GM18951 (cell line): ENCODE measurements at regions of chr3 and their contacts with region 1.

Region 1: DNA sequence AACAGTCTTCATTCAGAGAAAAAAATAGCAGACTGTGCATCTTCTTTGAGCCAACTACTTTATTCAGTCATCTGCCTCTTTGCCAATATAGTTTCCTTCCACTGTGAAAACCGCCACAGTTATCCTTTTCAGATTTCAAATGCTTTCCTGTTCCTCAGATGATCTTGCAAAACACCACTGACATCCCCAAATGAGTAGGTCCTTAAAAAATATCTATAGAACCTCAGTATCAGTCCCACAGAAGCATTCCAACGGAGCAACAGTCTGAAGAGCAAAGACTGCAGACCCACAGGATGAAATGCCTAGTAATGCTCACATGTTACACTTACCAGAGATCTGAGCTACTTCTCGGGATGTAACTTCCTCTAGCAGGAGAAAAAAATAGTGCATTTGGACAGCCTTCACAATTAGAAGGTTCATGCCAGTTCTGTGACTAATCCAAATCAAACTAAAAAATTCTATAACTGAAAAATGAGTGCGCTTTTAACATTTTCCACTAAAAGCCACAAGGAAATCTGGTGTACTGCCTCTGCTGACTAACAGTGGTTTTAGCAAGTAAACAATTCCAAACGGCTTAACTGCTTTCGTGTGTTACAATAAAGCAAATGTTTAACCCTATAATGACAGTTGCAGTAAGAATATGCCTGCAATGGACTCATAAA is at the start of gene ANKRD28:
- POLR2A ChIP-seq: no peak

Region 2: DNA sequence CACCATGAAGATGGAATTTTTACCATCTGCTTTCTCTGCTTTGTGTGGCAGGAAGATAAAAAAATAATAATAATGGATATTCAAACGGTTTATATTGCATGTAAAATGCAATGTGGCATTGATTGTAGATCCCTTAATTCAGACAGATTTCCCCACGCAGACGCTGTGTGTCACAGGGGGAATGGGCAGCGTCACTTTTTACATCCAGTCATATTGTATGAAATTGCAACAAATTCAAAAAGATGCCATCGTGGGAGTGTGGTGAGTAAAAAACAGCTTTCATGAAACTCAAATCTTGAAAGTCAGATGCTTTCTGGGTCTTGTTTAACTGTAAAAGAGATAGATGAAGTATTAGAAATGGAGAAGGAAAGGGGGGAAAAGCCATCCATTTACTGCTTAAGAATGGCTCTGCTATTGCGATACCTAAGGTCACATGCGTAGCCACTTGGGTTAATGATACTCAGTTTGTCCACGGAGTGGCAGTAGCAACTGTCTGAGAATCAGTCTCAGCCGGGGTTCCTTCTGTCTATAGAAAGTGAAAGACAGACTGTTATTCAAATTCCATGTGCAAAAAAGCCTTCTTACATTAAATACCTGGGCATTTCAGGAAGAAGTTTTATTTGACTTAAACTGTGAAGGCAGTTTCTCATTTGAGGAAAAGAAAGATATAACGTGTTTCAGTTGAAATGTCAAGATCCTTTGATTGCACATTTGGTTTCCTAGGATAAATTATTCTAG is 167.7 kb before region 1 on chr3:
- in situ Hi-C with region 1: loop called (anchors 10 kb)
- POLR2A ChIP-seq: no peak

Region 3: DNA sequence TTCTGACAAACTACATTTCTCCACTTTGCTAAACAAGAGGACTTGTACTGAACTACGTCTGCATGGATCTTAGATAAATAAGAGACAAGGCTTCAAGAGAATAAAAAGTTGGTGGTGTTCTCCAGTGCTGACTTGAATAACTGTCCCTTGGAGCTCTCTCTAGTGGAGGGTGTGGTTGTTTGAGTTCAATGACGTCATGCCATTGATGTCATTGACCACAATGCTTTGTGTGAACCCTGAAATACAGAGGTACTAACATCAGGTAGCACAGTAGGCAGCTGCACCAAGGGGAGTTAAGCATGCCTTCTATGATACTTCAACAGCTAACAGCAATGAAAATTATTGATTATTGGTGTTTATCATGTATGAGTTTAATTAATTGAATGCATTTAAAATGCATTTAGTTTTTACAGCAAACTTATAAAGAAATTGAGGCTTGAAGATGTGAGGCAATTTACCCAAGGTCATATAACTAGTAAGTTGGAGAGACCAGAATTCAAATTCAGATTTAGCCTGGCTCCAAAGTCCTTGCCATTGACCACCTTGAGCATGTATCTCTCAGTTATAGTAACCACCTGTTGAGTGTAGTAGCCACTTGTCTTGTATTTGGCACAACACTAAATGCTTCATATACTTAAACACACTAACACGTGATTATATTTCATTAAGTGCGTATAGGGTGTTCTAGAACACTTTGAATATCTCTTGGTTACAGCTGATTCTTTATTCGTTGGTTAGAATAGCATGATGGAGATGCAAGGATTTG is 126.0 kb after region 1 on chr3:
- in situ Hi-C with region 1: no loop called
- POLR2A ChIP-seq: no peak